ENCODE measurements at regions of chr1 and their contacts with region 1.

Region 1: DNA sequence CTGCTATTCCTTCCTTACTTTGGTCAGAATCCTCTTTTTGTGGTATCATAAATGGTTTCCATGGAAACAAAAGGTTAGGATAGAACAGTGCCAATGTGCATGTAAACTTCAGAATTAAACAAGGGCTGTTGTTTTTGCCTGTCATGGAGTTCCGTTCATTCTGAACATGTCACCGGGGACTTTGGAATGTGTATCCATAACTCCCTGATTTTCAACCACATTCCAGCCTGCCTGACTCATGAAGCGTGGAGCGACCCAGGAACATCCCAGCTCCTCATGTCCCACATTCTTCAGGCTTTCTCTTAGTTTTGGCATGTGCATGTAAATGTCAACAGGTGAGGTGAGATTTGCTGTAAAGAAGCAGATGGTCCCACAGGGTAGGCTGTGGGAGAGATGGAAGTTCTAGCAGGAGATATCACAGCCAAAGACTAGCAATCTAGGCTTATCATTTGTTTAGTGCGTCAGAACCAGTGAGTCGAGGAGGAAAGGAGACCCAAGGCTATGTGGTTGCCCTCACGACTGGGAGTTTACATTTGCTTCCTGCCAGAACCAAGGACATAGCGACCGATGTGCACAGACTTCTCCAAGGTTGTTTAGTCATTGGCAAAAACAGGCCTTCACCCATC is 23.0 kb upstream of the DNAJC11 start:
- DNase-seq: no peak
- H3K4me3 ChIP-seq: no peak overlapping the region
- H3K27ac ChIP-seq: no peak overlapping the region
- H3K4me1 ChIP-seq: no peaks in the 10 kb centered on the region
- H3K27me3 ChIP-seq: no peaks in the 10 kb centered on the region

Region 2: DNA sequence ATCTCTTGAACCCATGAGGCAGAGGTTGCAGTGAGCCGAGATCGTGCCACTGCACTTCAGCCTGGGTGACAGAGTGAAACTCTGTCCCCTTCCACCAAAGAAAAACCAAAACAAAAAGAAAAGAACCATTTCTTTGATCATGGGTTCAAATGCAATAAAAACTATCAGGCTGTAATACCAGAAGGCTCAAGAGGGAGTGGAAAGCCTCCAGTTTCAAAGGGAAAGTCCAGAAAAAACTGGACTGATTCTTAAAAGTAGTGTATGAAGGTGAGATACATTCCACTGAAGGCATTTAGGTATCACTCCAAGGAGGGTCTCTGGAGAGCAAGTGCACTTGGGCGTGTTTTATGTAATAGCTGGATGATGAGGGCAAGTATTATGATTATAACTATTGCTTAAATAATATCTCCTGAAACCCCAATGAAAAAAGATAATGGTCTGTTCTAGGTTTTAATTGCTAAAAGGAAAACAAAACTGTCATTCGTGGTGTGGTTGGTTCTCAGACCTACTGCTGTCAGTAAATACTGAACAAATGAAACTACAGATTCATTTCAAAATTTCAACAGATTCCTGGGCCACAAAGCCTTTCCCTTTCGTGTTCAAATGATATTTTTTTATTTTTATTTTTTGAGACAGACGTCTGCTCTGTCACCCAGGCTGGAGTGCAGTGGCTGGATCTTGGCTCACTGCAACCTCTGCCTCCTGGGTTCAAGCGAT is 54.6 kb after region 1 on chr1:
- CTCF ChIA-PET with region 1: interaction called, 11 read pairs
- POLR2A ChIA-PET with region 1: no interaction called
- DNase-seq: no peak
- H3K4me3 ChIP-seq: no peak overlapping the region
- H3K27ac ChIP-seq: no peak overlapping the region
- H3K4me1 ChIP-seq: peaks cover 8 to 15% (median 10%) of the 10 kb centered on the region in 4 experiments
- H3K27me3 ChIP-seq: no peaks in the 10 kb centered on the region

Region 3: DNA sequence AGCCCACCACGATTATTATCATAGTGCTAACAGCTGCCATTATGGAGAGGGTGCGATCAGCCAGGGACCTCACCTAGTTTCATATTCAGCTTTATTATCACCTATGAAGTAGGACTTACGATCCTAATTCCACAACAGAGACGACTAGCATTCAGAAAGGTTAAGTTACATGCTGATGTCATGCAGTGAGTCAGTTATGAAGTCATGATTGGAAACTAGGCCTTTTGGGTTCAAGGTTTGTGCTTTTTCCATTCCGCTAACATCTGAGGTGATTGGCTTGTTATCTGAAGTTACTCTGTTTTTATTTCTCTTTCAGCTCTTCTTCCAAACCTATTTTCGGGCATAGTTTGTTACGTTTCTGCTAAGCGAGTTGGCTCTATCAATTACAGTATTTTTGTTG is 311.8 kb after region 1 on chr1:
- CTCF ChIA-PET with region 1: no interaction called
- POLR2A ChIA-PET with region 1: no interaction called
- DNase-seq: no peak
- H3K4me3 ChIP-seq: no peak overlapping the region
- H3K27ac ChIP-seq: no peak overlapping the region
- H3K4me1 ChIP-seq: no peaks in the 10 kb centered on the region
- H3K27me3 ChIP-seq: no peaks in the 10 kb centered on the region

Region 4: DNA sequence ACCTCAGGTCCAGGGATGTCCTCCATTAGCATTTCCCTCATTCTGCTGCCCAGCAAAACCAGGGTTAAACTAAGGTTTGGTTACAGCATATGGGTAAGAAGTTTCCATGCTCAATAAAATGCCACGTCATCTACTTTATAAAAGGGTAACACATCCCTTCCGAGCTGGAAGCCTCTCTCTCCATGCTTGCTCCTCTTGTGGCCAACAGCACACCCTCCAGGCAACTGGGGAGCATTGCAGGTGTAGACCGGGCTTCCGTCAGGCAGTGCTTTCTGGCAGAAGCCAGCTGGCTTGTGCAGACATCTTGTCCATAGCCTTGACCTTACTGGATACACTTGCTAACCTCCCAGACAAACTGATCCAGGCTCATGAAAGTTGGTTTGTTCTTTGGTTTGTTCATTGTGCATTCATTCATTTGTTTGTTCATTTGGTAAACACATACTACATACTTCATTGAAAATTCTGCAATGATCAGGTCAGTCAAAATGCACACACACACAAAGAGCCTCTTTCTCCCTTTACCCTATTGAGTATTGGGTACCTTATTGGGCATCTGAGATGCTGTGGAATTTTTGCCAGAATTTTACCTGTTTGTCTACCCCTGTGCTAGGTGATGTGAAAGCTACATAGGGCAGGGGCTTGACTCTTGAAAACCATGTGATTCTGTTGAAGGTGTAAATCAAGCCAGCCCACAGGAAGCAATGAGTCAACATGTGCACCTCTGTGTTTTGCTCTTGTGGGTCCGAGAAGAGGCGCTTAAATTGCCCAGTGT is 483.4 kb after region 1 on chr1:
- CTCF ChIA-PET with region 1: interaction called, 19 read pairs
- POLR2A ChIA-PET with region 1: no interaction called
- DNase-seq: peak; percentile 81 to 91 (median 89)
- H3K4me3 ChIP-seq: no peak overlapping the region
- H3K27ac ChIP-seq: no peak overlapping the region
- H3K4me1 ChIP-seq: peaks cover 0 to 4% (median 0%) of the 10 kb centered on the region in 4 experiments
- H3K27me3 ChIP-seq: peaks cover 0 to 9% (median 7%) of the 10 kb centered on the region in 5 experiments